ENCODE measurements at regions of chr19 and their contacts with region 1.

Region 1: GRCh38 chr19:8209462-8210378 is 550 bp downstream of the CERS4 start:
- DNase-seq: peak in 1 of 3 donors; percentile 48
- H3K4me3 ChIP-seq: peak overlapping the region; percentile 31 to 72 (median 45)
- H3K4me3 Mint-ChIP-seq: peak overlapping the region; percentile 73 to 90
- H3K27ac ChIP-seq: no peak overlapping the region
- H3K27ac Mint-ChIP-seq: peak overlapping the region in 5 of 7 donors; percentile 54 to 85 (median 63)
- H3K4me1 ChIP-seq: peaks cover 16 to 22% of the 10 kb centered on the region in 2 donors
- H3K4me1 Mint-ChIP-seq: peaks cover 28% of the 10 kb centered on the region
- H3K27me3 ChIP-seq: peaks cover 6 to 49% of the 10 kb centered on the region in 2 donors
- H3K27me3 Mint-ChIP-seq: peaks cover 53 to 74% (median 68%) of the 10 kb centered on the region in 3 donors
- CTCF ChIP-seq: no peak

Region 2: DNA sequence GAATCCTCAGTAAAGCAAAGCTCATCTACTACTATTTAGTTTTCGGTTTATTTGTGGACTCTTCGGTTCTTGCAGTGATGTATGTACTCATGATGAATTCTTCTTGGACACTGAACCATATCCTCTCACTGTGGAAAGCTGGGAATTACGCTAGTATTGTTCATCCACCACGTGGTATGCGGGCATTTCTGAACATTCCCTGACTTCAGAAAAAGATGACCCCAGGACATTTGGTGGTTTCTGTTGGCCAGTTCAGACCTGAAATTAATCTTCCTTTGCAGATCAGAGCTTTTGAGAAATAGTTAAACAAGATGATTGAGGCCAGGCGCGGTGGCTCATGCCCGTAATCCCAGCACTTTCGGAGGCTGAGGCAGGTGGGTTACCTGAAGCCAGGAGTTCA is 35.0 kb before region 1 on chr19:
- intact Hi-C with region 1: loop called in 1 of 2 experiments (anchors 5 kb)
- DNase-seq: no peak
- H3K4me3 ChIP-seq: no peak overlapping the region
- H3K4me3 Mint-ChIP-seq: no peak overlapping the region
- H3K27ac ChIP-seq: no peak overlapping the region
- H3K27ac Mint-ChIP-seq: no peak overlapping the region
- H3K4me1 ChIP-seq: peaks cover 0 to under 1% of the 10 kb centered on the region in 2 donors
- H3K4me1 Mint-ChIP-seq: peaks cover 3% of the 10 kb centered on the region
- H3K27me3 ChIP-seq: no peaks in the 10 kb centered on the region
- H3K27me3 Mint-ChIP-seq: peaks cover 8 to 13% (median 9%) of the 10 kb centered on the region in 3 donors
- CTCF ChIP-seq: no peak

Region 3: GRCh38 chr19:8321060-8321985 is 111.6 kb after region 1 on chr19 and contains the starts of genes NDUFA7 and RPS28:
- intact Hi-C with region 1: no loop called
- DNase-seq: peak; percentile 97
- H3K4me3 ChIP-seq: peak within 1 kb of the TSS; percentile 61 to 100 (median 90)
- H3K4me3 Mint-ChIP-seq: peak within 1 kb of the TSS; percentile 98 to 99
- H3K27ac ChIP-seq: peak within 1 kb of the TSS; percentile 84 to 97
- H3K27ac Mint-ChIP-seq: peak within 1 kb of the TSS; percentile 94 to 99 (median 97)
- H3K4me1 ChIP-seq: peaks cover 20 to 26% of the 10 kb centered on the region in 2 donors
- H3K4me1 Mint-ChIP-seq: peaks cover 28% of the 10 kb centered on the region
- H3K27me3 ChIP-seq: no peaks in the 10 kb centered on the region
- H3K27me3 Mint-ChIP-seq: peaks cover 0 to 7% (median 3%) of the 10 kb centered on the region in 3 donors
- CTCF ChIP-seq: no peak
- polyA plus RNA-seq, gene NDUFA7: 49.9 to 153 (median 133) TPM
- polyA plus RNA-seq, gene RPS28: 539 to 1,104 (median 984) TPM